HCT116 (cell line): ENCODE measurements at regions of chr11 and their contacts with region 1.

Region 1: GRCh38 chr11:129922674-129923073 is 27.3 kb upstream of the NFRKB start:
- DNase-seq: no peak
- ATAC-seq: peak; percentile 68
- H3K4me3 ChIP-seq: no peak overlapping the region
- H3K27ac ChIP-seq: no peak overlapping the region
- H3K4me1 ChIP-seq: peaks cover 0 to 5% of the 10 kb centered on the region in 2 experiments; a peak in 1 of 4 replicates
- H3K27me3 ChIP-seq: no peaks in the 10 kb centered on the region
- CTCF ChIP-seq: peak in 1 of 3 experiments; percentile 15; a peak in 1 of 6 replicates
- POLR2A ChIP-seq: no peak
- RAD21 ChIP-seq: no peak

Region 2: DNA sequence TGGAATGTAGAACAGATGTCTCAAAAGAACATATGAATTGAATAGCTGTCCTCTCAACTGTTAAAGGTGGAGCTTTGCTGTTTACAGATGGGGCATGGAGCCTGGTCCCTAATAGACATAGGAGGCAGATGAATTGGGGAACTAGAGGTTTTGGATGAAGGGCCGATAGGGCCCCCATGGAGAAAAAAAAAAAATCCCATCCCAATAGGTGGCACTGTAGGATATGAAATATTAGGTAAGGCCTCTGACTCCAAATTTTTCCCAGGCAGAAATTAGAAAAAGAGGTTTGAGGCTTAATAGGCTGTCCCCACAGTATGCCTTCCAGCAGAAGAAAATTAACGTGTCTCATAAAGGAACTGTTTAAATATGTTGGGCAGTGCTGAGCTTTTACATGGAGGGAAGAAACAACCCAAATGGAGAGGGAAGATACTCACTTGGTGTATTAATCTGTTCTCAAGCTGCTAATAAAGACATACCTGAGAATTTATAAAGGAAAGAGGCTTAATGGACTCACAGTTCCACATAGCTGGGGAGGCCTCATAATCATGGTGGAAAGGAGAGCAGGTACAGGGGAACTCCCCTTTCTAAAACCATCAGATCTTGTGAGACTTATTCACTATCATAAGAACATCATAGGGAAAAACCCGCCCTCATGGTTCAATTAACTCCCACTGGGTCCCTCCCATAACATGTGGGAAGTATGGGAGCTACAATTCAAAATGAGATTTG is 137.1 kb before region 1 on chr11:
- CTCF ChIA-PET with region 1: no interaction called
- POLR2A ChIA-PET with region 1: no interaction called
- RAD21 ChIA-PET with region 1: no interaction called
- intact Hi-C with region 1: loop called (anchors 1 kb)
- DNase-seq: no peak
- ATAC-seq: no peak; the same call in 1 of the 2 replicates
- H3K4me3 ChIP-seq: no peak overlapping the region
- H3K27ac ChIP-seq: no peak overlapping the region
- H3K4me1 ChIP-seq: no peaks in the 10 kb centered on the region
- H3K27me3 ChIP-seq: no peaks in the 10 kb centered on the region
- CTCF ChIP-seq: peak; percentile 15 to 43 (median 27); a peak in 4 of 6 replicates
- POLR2A ChIP-seq: no peak
- RAD21 ChIP-seq: peak; percentile 59

Region 3: GRCh38 chr11:130145975-130146776 is 223.5 kb after region 1 on chr11:
- CTCF ChIA-PET with region 1: interaction called, 8 read pairs
- POLR2A ChIA-PET with region 1: no interaction called
- RAD21 ChIA-PET with region 1: interaction called, 3 to 4 read pairs
- intact Hi-C with region 1: loop called (anchors 1 kb)
- DNase-seq: peak; percentile 87
- ATAC-seq: peak; percentile 93
- H3K4me3 ChIP-seq: peak overlapping the region in 1 of 2 experiments; percentile 26; a peak in 2 of 4 replicates
- H3K27ac ChIP-seq: peak overlapping the region; percentile 63
- H3K4me1 ChIP-seq: peaks cover 31 to 41% of the 10 kb centered on the region in 2 experiments
- H3K27me3 ChIP-seq: no peaks in the 10 kb centered on the region
- CTCF ChIP-seq: peak; percentile 50 to 66 (median 61)
- POLR2A ChIP-seq: no peak
- RAD21 ChIP-seq: peak; percentile 70